Posterior cingulate gyrus (tissue), 11 donors: ENCODE measurements at regions of chr5 and their contacts with region 1.

Region 1: GRCh38 chr5:160508780-160509361 is 87.2 kb downstream of the PTTG1 start:
- DNase-seq: peak in 8 of 10 donors; percentile 13 to 92 (median 57)

Region 2: GRCh38 chr5:160439205-160439600 is 69.7 kb before region 1 on chr5:
- intact Hi-C with region 1: loop called (anchors 2 kb)
- DNase-seq: peak; percentile 79 to 98 (median 90)

Region 3: DNA sequence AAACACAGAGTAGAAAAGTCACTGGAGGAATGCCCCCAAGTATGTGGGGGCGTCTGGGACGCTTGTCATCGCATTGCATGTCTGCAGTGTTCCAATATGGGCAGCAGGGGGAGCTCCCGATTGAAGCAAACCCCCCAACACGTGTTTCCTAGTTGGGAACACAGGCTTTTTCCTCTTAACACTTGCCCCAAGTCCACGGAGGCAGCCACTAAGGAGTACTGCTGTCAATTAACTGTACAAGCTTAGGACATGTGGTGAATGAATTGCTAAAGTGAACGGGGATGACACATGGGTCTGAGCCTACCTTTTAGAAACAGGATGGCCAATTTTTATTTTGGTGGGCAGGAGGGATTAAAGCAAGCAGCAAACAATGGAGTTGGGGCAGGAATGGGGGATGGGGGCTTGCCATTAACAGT is 1035.5 kb after region 1 on chr5:
- intact Hi-C with region 1: loop called (anchors 10 kb)
- DNase-seq: peak; percentile 33 to 95 (median 64)